ENCODE measurements at regions of chr1 and their contacts with region 1.

Region 1: GRCh38 chr1:89987170-89987819 is 7.6 kb upstream of the ZNF326 start:
- H3K4me3 ChIP-seq: no peak overlapping the region
- H3K27ac ChIP-seq: no peak overlapping the region
- H3K4me1 ChIP-seq: peaks cover 3% of the 10 kb centered on the region; the same call in 1 of the 2 replicates
- CTCF ChIP-seq: peak; percentile 58

Region 2: GRCh38 chr1:89688607-89689006 is 298.7 kb before region 1 on chr1:
- CTCF ChIA-PET with region 1: no interaction called
- POLR2A ChIA-PET with region 1: no interaction called
- H3K4me3 ChIP-seq: no peak overlapping the region
- H3K27ac ChIP-seq: no peak overlapping the region
- H3K4me1 ChIP-seq: peaks cover 5% of the 10 kb centered on the region; the same call in 1 of the 2 replicates
- CTCF ChIP-seq: no peak

Region 3: GRCh38 chr1:89804642-89805237 is 182.6 kb before region 1 on chr1:
- CTCF ChIA-PET with region 1: interaction called, 34 read pairs
- POLR2A ChIA-PET with region 1: no interaction called
- H3K4me3 ChIP-seq: no peak overlapping the region
- H3K27ac ChIP-seq: no peak overlapping the region
- H3K4me1 ChIP-seq: no peaks in the 10 kb centered on the region
- CTCF ChIP-seq: peak; percentile 73

Region 4: GRCh38 chr1:89949991-89950624 is 37.2 kb before region 1 on chr1:
- CTCF ChIA-PET with region 1: no interaction called
- POLR2A ChIA-PET with region 1: no interaction called
- H3K4me3 ChIP-seq: no peak overlapping the region
- H3K27ac ChIP-seq: no peak overlapping the region
- H3K4me1 ChIP-seq: no peaks in the 10 kb centered on the region
- CTCF ChIP-seq: no peak

Region 5: DNA sequence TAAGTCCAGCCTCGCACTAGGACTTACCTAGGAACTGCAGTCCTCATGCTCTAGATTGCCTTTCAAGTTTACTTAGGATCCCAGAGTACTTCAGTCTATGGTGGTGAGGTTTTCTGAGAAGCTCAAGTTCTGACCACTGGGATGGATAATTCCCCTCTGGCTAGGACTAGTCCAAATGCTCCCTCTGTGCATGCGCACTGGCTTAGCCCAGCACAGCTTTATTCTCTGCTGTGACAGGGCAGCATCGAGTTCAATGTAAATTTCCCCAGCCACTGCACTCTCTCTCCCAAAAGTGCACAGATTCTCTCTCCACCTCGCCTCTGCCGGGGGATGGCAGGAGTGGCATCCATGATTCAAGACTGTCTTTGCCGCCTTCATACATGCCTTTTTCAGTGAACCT is 249.2 kb after region 1 on chr1:
- CTCF ChIA-PET with region 1: no interaction called
- POLR2A ChIA-PET with region 1: no interaction called
- H3K4me3 ChIP-seq: no peak overlapping the region
- H3K27ac ChIP-seq: no peak overlapping the region
- H3K4me1 ChIP-seq: no peaks in the 10 kb centered on the region
- CTCF ChIP-seq: no peak

Measured in HEK293 (cell line).